GM10248 (cell line): ENCODE measurements at regions of chr19 and their contacts with region 1.

Region 1: GRCh38 chr19:45125926-45126493 is 33.0 kb downstream of the PPP1R37 start:
- DNase-seq: peak; percentile 74
- CTCF ChIP-seq: peak; percentile 83

Region 2: GRCh38 chr19:44988896-44989556 is 137.0 kb before region 1 on chr19:
- CTCF ChIA-PET with region 1: no interaction called
- POLR2A ChIA-PET with region 1: no interaction called
- DNase-seq: peak; percentile 85
- CTCF ChIP-seq: peak; percentile 71

Region 3: DNA sequence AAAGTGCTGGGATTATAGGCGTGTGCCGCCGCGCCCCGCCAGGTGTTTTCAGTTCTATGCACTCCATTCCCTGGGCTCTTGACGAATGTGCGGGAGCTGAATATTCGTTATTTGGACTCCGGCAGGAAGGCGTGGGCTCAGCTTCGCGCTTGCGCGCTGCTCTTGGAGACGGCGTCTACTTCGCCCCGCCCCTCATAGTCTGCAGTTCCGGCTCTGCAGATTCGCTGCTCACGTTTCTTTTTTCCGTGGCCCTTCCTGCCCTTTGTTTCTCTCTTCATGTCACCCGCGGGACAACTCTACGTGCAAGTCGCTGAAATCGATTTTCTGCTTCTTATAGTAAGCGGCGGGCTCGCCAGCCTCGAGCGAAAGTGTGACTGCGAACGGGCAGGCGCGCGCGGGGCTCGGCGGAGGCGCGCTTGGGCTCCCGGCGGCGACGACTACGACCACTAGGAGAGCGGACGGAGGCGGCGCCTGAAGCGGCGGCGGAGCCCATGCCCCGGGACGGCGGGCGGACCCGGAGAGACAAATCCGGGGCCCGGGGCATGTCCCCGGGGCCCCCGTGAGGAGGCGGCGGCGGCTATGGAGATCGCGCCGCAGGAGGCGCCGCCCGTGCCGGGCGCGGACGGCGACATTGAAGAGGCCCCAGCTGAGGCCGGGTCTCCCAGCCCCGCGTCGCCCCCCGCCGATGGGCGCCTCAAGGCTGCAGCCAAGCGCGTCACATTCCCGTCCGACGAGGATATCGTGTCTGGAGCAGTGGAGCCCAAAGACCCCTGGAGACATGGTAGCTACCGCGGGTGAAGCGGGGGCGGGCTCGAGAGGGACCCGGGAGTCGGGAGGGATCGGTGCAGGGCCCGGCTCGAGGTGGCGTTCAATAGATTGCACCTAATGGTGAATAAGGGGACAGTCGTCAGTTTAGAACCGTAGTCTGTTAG is 33.0 kb before region 1 on chr19 and contains the start of gene PPP1R37:
- CTCF ChIA-PET with region 1: interaction called, 15 read pairs
- POLR2A ChIA-PET with region 1: no interaction called
- DNase-seq: peak; percentile 95
- CTCF ChIP-seq: no peak

Region 4: GRCh38 chr19:45103156-45103507 is 22.9 kb before region 1 on chr19:
- CTCF ChIA-PET with region 1: interaction called, 11 read pairs
- POLR2A ChIA-PET with region 1: interaction called, 7 read pairs
- DNase-seq: no peak
- CTCF ChIP-seq: peak; percentile 30

Region 5: DNA sequence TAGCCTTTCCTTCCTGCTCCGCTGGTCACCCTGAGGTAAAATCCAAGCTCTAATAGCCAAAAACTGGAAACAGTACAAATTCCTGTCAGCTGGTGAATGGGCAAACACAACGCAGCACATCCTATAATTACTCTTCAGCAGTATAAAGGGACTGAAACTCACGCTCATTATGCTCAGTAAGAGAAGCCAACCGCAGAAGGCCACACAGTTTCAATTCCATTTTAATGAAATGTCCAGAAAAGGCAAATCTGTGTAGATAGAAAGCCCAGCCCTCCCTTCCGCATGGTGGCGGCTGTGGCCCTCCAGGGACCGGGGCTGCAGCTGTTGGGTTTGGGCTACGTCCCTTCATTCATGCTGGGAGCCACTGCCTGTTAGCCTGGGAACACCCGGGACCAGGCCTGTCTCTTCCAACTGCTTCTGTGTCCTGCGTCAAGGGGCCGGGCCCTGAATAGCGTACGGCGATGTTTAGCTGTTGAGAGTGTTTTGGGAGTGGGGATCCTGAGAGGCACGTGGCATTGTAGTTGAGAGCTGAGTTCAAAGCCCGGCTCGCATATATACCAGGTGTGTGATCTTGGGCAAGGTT is 11.3 kb after region 1 on chr19:
- CTCF ChIA-PET with region 1: interaction called, 44 read pairs
- POLR2A ChIA-PET with region 1: no interaction called
- DNase-seq: peak; percentile 86
- CTCF ChIP-seq: peak; percentile 40

Region 6: GRCh38 chr19:45152504-45153338 is 26.7 kb after region 1 on chr19:
- CTCF ChIA-PET with region 1: interaction called, 15 read pairs
- POLR2A ChIA-PET with region 1: no interaction called
- DNase-seq: peak; percentile 60
- CTCF ChIP-seq: no peak